ENCODE measurements at regions of chr19 and their contacts with region 1.

Region 1: GRCh38 chr19:57819475-57820148 is 4.9 kb upstream of the ZNF552 start:
- DNase-seq: peak; percentile 89
- ATAC-seq: peak; percentile 90
- H3K4me3 Mint-ChIP-seq: peak overlapping the region; percentile 97
- H3K27ac Mint-ChIP-seq: peak overlapping the region; percentile 94
- H3K4me1 Mint-ChIP-seq: peaks cover 51% of the 10 kb centered on the region
- H3K27me3 Mint-ChIP-seq: no peaks in the 10 kb centered on the region

Region 2: DNA sequence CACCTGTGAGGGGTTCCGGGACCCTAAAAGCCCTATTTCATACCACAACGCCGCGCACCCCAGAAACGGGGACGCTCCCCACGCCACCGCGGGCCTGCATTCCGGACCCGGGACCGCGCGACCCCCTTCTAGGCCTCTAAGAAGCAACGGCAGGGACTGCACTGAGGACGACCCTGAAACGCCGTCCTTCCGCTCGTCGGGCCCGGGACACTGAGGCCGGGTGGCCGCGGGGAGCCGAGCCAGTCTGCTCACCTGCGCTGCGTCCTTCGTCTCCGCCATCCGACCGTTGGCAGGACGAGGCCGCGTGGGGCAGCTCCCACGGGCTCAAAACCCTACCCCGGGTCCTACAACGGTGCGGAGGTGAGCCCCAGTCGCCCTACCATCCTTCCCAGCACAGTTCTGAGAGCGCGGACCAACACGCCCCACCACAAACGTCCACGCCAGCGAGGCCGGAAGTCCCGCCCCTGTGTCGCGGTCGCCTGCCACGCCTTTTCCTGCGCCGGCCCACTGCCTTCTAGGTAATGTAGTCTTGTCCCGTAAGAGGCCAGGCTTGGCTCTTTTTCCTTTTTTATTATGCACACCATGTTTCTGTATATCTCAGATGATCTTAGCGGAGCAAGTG is 260.1 kb before region 1 on chr19 and contains the start of gene ZNF550:
- CTCF ChIA-PET with region 1: no interaction called
- POLR2A ChIA-PET with region 1: no interaction called
- intact Hi-C with region 1: loop called in 1 of 2 experiments (anchors 1 kb)
- DNase-seq: peak; percentile 93
- ATAC-seq: peak; percentile 97
- H3K4me3 Mint-ChIP-seq: peak within 1 kb of the TSS; percentile 98
- H3K27ac Mint-ChIP-seq: peak within 1 kb of the TSS; percentile 93
- H3K4me1 Mint-ChIP-seq: peaks cover 22% of the 10 kb centered on the region
- H3K27me3 Mint-ChIP-seq: no peaks in the 10 kb centered on the region
- total RNA-seq, gene ZNF550: 11.8 to 11.9 TPM

Region 3: DNA sequence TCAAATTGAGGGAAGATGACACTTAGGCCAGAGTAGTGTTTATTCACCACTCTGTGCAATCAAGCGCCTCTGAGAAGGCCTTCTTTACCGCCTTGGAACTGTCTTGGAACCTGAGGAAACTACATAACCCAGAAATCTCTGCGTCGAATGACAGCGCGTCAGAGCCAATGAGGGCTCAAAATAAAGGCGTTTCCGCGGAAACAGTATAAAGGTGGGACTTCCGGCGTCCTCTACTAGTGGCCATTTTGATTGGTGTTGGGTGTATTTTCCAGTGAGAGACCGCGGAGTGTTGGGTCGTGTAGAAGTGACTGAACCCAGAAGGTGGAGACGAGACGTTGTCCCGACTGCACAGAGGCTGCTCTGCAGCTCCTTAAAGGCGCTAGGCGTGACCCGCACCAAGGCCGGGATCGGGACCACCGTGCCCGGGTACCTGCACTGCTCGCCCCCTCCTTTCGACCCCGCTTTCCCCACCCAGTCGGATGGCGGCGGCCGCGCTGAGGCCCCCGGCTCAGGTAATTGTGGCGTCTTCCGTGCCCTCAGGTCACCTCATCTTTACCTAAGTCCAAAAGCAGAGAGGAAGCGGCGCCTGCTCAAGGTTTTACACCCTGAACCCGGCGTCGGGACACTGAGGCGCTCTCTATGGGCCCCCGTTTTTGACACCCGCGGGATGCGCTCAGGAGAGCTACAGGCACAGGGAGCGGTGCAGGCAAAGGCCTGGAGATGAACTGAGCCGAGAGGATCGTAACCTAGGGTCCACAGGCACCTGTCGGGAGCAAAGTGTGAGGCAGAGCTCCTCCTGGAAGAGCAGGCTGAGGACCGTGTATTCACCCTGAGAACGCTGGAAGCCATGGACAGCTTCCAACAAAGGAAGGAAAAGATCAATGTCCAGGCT is 72.8 kb before region 1 on chr19 and contains the start of gene ZNF776:
- CTCF ChIA-PET with region 1: no interaction called
- POLR2A ChIA-PET with region 1: no interaction called
- intact Hi-C with region 1: loop called (anchors 1 to 5 kb)
- DNase-seq: peak; percentile 89
- ATAC-seq: peak; percentile 98
- H3K4me3 Mint-ChIP-seq: peak within 1 kb of the TSS; percentile 93
- H3K27ac Mint-ChIP-seq: peak within 1 kb of the TSS; percentile 98
- H3K4me1 Mint-ChIP-seq: peaks cover 15% of the 10 kb centered on the region
- H3K27me3 Mint-ChIP-seq: no peaks in the 10 kb centered on the region
- total RNA-seq, gene ZNF776: 8.9 to 14.7 TPM

Region 4: GRCh38 chr19:57781815-57782214 is 37.8 kb before region 1 on chr19:
- CTCF ChIA-PET with region 1: no interaction called
- POLR2A ChIA-PET with region 1: no interaction called
- intact Hi-C with region 1: no loop called
- DNase-seq: no peak
- ATAC-seq: no peak
- H3K4me3 Mint-ChIP-seq: no peak overlapping the region
- H3K27ac Mint-ChIP-seq: no peak overlapping the region
- H3K4me1 Mint-ChIP-seq: no peaks in the 10 kb centered on the region
- H3K27me3 Mint-ChIP-seq: no peaks in the 10 kb centered on the region

Region 5: GRCh38 chr19:57841122-57841763 is 21.6 kb after region 1 on chr19:
- CTCF ChIA-PET with region 1: no interaction called
- POLR2A ChIA-PET with region 1: no interaction called
- intact Hi-C with region 1: loop called in 1 of 2 experiments (anchors 1 kb)
- DNase-seq: no peak
- ATAC-seq: no peak
- H3K4me3 Mint-ChIP-seq: no peak overlapping the region
- H3K27ac Mint-ChIP-seq: no peak overlapping the region
- H3K4me1 Mint-ChIP-seq: peaks cover 8% of the 10 kb centered on the region
- H3K27me3 Mint-ChIP-seq: no peaks in the 10 kb centered on the region

Region 6: GRCh38 chr19:57947208-57948134 is 127.9 kb after region 1 on chr19 and contains the start of gene ZNF256:
- CTCF ChIA-PET with region 1: no interaction called
- POLR2A ChIA-PET with region 1: no interaction called
- intact Hi-C with region 1: loop called in 1 of 2 experiments (anchors 1 kb)
- DNase-seq: peak; percentile 95
- ATAC-seq: peak; percentile 99
- H3K4me3 Mint-ChIP-seq: peak within 1 kb of the TSS; percentile 87
- H3K27ac Mint-ChIP-seq: peak within 1 kb of the TSS; percentile 90
- H3K4me1 Mint-ChIP-seq: peaks cover 16% of the 10 kb centered on the region
- H3K27me3 Mint-ChIP-seq: no peaks in the 10 kb centered on the region
- total RNA-seq, gene ZNF256: 6.3 to 6.9 TPM

Region 7: GRCh38 chr19:57978586-57979289 is 159.1 kb after region 1 on chr19:
- CTCF ChIA-PET with region 1: no interaction called
- POLR2A ChIA-PET with region 1: no interaction called
- intact Hi-C with region 1: no loop called
- DNase-seq: no peak
- ATAC-seq: no peak
- H3K4me3 Mint-ChIP-seq: no peak overlapping the region
- H3K27ac Mint-ChIP-seq: no peak overlapping the region
- H3K4me1 Mint-ChIP-seq: no peaks in the 10 kb centered on the region
- H3K27me3 Mint-ChIP-seq: no peaks in the 10 kb centered on the region